GM10248 (cell line): ENCODE measurements at regions of chr3 and their contacts with region 1.

Region 1: GRCh38 chr3:179981646-179982045 is 55.1 kb downstream of the PEX5L start:
- DNase-seq: no peak
- CTCF ChIP-seq: no peak

Region 2: DNA sequence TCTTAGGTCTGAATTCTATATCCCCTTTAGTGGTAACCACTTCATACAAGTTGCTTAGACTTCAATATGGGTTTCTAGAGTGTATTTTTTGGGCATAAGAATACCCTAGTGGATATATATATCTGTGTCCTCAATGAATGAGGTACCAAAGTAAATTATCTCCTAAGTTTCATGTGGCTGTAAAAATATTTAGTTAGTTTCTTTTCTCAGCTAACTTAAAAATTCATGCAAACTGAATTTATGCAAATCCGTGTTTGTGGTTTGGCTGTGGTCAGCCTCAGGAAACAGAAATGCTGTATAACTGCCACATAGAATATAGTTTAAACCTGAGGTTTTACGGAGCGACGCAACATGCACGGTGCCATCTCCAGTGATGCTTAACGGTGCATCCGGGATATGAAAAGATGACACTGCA is 25.2 kb before region 1 on chr3:
- CTCF ChIA-PET with region 1: no interaction called
- POLR2A ChIA-PET with region 1: no interaction called
- DNase-seq: peak; percentile 22
- CTCF ChIP-seq: no peak

Region 3: DNA sequence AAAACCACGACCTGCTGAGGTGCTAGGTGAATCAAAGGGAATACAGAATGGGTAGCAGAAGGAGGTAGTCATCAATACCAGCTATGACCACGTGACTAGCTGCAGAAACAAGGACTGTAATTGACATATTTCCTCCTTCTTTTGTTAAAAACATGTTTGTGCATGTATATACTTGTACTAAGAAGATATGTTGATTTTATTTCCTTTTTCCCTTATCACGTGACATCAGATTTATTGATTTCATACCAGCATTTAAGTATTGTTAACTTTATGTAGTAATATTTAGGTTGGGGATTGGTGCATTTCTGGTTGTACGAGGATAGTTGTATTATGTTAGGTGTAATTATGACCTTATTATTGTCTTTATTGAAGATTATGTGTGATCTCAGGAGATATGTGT is 18.9 kb after region 1 on chr3:
- CTCF ChIA-PET with region 1: no interaction called
- POLR2A ChIA-PET with region 1: no interaction called
- DNase-seq: no peak
- CTCF ChIP-seq: no peak

Region 4: DNA sequence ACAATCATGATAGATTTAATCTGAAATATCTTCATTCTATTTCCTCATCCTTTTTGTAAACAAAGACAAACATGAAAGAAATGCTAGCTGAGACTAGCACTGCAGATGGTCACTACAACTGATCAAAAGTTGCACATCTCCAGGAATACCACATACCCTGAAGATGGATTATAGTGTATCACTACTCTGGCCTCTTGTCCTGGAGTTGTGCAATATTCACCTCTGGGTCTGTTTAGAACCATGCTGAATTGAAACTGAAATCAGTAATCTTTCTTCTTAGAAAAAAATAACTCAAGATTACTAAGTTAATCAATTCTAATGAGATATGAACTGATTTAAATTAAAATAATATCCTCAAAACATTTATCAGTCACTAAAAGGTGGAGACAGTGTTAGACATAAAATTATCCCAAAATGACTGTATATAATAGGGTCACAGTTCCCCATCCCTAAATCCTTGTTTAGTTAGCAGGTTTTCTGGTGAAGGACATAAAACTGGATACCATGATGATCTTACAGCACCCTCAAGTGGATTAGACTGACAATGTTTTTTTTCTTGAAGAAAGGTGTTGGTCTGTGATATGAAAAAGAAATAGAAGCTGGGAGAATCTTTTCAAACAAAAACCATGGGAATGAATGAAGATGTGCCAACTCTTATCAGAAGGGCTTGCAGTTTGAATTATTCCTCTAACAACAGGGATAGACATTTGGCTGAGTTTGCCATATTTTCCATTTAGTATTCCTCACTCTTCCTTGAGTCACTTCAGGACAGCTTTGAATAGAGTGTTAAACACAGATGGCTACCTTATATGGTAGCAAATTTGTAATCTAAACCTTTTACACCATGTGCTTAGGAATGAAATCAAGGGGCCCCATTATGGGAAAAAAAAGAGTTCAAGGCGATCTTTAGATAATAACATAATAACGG is 613.2 kb after region 1 on chr3:
- CTCF ChIA-PET with region 1: no interaction called
- POLR2A ChIA-PET with region 1: interaction called, 10 read pairs
- DNase-seq: peak; percentile 20
- CTCF ChIP-seq: peak; percentile 48